IMR-90 (cell line): ENCODE measurements at regions of chr9 and their contacts with region 1.

Region 1: GRCh38 chr9:78549711-78550110 is 252.8 kb downstream of the PSAT1 start:
- DNase-seq: peak; percentile 17
- ATAC-seq: 0 out of 2 replicates have a peak, but pooled peaks have one; percentile 35
- H3K4me3 ChIP-seq: no peak overlapping the region
- H3K27ac ChIP-seq: no peak overlapping the region
- H3K4me1 ChIP-seq: no peaks in the 10 kb centered on the region
- H3K27me3 ChIP-seq: peaks cover 19% of the 10 kb centered on the region
- CTCF ChIP-seq: no peak
- POLR2A ChIP-seq: no peak
- RAD21 ChIP-seq: no peak

Region 2: GRCh38 chr9:78973889-78974288 is 424.2 kb after region 1 on chr9:
- CTCF ChIA-PET with region 1: no interaction called
- POLR2A ChIA-PET with region 1: interaction called, 13 read pairs
- dilution Hi-C with region 1: no loop called
- in situ Hi-C with region 1: no loop called
- intact Hi-C with region 1: no loop called
- DNase-seq: peak; percentile 79
- ATAC-seq: peak; percentile 46; the same call in 1 of the 2 replicates
- H3K4me3 ChIP-seq: no peak overlapping the region
- H3K27ac ChIP-seq: no peak overlapping the region
- H3K4me1 ChIP-seq: no peaks in the 10 kb centered on the region
- H3K27me3 ChIP-seq: no peaks in the 10 kb centered on the region
- CTCF ChIP-seq: no peak
- POLR2A ChIP-seq: no peak
- RAD21 ChIP-seq: no peak